SK-N-SH (cell line): ENCODE measurements at regions of chr15 and their contacts with region 1.

Region 1: GRCh38 chr15:25693321-25694237 is 169.5 kb downstream of the ATP10A start:
- DNase-seq: peak; percentile 68
- H3K4me3 ChIP-seq: no peak overlapping the region; a peak in 1 of 4 replicates
- H3K27ac ChIP-seq: no peak overlapping the region
- H3K4me1 ChIP-seq: no peaks in the 10 kb centered on the region
- H3K27me3 ChIP-seq: no peaks in the 10 kb centered on the region
- CTCF ChIP-seq: peak; percentile 39
- EP300 ChIP-seq: no peak
- RAD21 ChIP-seq: peak; percentile 59

Region 2: DNA sequence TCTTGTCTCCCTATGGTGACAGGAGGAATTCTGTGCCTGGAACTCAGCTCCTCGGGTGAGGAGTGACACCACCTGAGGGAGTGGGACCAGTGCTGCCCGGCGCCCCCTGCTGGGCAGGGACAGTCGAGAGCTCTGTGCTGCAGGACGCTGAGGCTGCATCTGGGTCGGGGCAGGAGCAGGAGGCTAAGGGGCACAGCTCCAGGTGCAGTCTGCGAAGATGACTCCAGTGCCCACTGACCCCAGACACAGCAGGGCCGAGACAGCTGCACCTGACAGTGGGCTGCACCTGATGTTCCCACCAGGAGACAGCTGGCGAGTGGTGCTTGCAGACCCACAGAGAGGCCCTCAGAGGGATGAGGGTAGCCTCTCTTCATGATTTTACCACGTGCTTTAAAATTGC is 16.6 kb after region 1 on chr15:
- CTCF ChIA-PET with region 1: interaction called, 23 read pairs
- POLR2A ChIA-PET with region 1: no interaction called
- DNase-seq: peak; percentile 72
- H3K4me3 ChIP-seq: no peak overlapping the region; a peak in 1 of 4 replicates
- H3K27ac ChIP-seq: no peak overlapping the region
- H3K4me1 ChIP-seq: no peaks in the 10 kb centered on the region
- H3K27me3 ChIP-seq: no peaks in the 10 kb centered on the region
- CTCF ChIP-seq: peak; percentile 50
- EP300 ChIP-seq: no peak
- RAD21 ChIP-seq: peak; percentile 33